Posterior cingulate gyrus (tissue), 11 donors: ENCODE measurements at regions of chr16 and their contacts with region 1.

Region 1: DNA sequence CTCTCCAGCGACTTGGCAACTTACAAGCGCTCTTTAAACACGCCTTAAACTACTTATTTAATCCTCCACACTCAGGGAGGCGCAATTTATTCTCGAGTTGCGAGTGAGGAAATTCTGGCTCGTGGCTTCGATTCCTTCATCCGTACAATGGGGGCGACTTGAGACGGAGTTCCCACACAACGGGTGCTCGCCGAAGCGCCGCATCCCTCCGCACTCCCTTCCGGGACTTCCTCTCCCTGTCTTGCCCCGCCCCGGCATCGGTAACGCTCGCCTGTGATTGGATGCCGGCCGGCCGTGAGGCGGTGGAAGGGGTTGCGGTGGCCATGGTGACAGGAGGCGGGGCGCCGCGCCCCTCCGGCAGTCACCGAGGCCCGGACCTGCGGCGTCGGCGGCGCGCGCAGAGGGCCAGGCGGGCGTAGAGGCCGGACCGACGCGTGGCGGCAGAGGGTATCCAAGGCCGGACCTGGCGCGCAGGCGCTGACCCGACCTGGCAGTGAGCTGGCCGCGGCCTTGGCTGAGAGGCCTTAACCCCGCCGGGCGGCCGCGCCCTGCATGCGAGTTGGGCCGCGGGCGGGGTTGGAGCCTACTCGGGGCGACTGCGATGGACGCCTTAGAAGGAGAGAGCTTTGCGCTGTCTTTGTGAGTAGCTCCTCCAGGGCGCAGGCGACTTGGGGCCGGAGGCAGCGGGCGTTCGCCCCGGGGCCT is at the start of gene ARL2BP:
- DNase-seq: peak; percentile 97 to 100 (median 99)

Region 2: DNA sequence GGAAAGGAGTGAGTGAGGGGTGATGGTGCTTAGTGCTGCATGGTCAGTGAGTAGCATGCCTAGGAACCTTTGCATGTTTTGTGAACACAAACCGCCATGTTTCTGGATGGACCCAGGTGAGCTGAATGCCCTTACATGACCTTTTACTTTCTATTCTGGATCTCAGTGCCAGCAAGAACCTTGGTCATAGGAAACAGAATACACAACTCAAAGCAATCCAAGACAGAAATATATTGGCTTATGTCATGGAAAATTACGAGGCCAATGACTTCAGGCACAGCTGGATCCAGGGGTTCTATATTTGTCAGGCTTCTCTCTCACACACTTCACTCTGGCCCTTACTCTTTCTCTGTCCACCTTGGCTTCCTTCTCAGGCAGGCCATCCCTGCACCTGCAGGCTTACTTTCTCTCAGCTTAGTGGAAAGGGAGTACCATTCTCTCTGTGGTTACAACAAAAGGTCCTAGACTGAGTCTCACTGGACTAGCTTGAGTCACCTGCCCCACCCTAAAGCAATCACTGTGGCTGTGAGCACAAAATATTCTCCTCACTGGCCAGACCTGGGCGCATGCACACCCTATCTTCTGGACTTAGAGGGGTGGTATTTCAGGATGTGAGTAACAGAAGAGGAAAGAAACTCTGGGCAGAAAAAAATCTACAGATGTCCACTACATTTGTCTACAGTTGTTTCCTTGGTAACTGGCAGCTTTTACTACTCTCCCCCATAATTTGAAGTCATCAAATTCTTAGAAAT is 172.9 kb before region 1 on chr16:
- intact Hi-C with region 1: no loop called
- DNase-seq: no peak

Region 3: DNA sequence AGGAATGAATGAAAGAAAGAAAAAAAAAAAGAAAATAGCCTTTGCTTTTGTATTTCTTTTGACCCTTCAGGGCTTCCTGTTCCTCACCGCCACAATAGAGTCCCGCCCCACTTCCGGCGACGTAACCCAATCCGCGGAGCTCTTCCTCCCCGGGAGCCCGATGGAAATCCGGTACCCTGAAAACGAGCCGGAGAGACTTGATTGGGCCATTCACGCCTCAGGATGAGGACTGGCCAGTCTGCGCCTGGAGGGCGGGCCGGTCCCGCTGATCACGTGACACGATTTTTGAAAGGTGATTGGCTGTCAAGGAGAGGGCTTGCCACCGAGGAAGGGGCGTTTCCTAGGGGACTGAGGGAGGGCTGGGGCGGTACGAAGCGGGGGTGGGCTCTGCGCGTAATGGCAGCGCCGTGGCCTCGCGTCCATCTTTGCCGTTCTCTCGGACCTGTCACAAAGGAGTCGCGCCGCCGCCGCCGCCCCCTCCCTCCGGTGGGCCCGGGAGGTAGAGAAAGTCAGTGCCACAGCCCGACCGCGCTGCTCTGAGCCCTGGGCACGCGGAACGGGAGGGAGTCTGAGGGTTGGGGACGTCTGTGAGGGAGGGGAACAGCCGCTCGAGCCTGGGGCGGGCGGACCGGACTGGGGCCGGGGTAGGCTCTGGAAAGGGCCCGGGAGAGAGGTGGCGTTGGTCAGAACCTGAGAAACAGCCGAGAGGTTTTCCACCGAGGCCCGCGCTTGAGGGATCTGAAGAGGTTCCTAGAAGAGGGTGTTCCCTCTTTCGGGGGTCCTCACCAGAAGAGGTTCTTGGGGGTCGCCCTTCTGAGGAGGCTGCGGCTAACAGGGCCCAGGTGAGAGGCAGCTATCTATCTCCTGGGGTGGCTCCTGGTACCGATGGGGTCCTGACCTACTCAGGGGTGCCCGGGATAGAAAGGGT is 58.7 kb before region 1 on chr16 and contains the starts of genes PSME3IP1 and RSPRY1:
- intact Hi-C with region 1: loop called (anchors 2 kb)
- DNase-seq: peak; percentile 97 to 100 (median 99)

Region 4: DNA sequence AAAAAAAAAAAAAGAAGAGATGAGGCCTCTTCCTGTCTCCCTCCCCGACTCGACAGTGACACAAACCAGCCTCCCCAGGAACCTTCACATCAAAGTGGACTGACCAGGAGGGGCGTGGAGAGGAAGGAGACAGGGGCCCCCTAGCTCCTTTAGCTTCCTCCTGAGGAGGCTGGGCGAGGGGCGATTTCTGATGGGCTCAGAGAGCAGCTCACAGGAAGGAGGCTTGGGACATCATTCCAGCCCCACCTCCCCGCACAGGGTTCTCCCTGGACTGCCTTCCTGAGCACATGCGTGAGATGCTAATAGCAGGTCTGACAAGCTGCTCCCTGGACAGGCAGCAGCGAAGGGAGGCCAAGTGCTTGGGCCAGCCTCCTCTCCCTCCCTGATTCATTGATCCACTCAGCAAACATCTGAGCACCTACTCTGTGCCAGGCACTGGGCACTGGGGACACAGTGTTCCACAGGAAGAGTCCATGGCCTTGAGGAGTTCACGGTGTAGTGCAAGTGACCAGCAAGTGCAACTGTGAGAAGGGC is 255.7 kb after region 1 on chr16:
- intact Hi-C with region 1: no loop called
- DNase-seq: peak in 4 of 10 donors; percentile 19 to 72 (median 50)